ENCODE measurements at regions of chr19 and their contacts with region 1.

Region 1: GRCh38 chr19:6292006-6292405 is 12.2 kb upstream of the MLLT1 start:
- DNase-seq: no peak
- ATAC-seq: no peak

Region 2: GRCh38 chr19:6110360-6110977 is 181.5 kb before region 1 on chr19 and contains the start of gene RFX2:
- intact Hi-C with region 1: no loop called
- DNase-seq: peak; percentile 99
- ATAC-seq: peak; percentile 97
- total RNA-seq, gene RFX2: 8.3 TPM

Region 3: DNA sequence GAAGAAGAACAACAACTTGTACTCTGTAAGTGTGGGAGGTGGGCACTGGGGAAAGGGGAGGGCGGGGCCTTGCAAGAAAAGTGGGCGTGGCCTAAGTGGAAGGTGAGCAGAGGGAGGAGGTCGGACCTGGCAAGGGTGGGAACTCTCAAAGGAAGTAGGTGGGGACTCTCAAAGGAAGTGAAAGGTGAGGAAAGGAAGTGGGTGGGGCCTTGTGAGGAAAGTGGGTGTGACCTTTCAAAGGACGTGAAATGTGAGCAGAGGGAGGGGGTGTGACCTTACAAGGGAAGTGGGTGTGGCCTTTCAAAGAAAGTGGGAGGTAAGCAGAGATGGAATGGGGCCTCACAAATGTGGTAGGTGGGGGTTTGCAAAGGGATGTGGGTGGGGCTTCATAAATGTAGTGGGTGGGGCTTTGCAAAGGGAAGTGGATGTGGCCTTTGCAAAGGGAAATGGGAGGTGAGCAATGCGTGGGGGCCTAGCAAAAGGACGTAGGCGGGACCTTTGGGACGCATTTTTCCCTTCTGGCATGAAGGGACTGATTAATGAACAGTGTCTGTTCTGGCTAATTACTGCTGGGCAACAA is 130.6 kb before region 1 on chr19:
- intact Hi-C with region 1: loop called (anchors 10 kb)
- DNase-seq: peak; percentile 37
- ATAC-seq: peak; percentile 51